ENCODE measurements at regions of chr11 and their contacts with region 1.

Region 1: GRCh38 chr11:103448966-103449365 is 339.7 kb downstream of the DYNC2H1 start:
- DNase-seq: no peak
- H3K4me3 ChIP-seq: no peak overlapping the region
- H3K27ac ChIP-seq: no peak overlapping the region
- H3K4me1 ChIP-seq: no peaks in the 10 kb centered on the region
- H3K27me3 ChIP-seq: no peaks in the 10 kb centered on the region
- CTCF ChIP-seq: no peak

Region 2: DNA sequence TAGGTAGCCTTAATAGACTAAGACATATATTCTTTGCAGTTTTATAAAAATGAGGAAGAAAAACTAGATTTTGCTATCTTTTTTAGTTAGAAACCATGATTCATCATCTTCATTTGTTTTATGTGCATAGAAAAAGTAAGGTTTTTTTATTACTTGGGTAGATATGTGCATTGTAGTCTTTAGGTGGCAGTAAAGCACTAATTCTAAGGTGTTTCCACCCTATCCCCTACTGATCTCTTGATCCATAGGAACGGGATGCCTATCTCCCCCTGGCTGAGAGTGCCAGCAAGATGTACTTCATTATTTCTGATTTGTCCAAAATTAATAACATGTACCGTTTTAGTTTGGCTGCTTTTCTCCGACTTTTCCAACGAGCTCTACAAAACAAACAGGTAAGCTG is 191.6 kb before region 1 on chr11:
- CTCF ChIA-PET with region 1: no interaction called
- dilution Hi-C with region 1: no loop called
- in situ Hi-C with region 1: no loop called
- intact Hi-C with region 1: loop called (anchors 10 kb)
- DNase-seq: no peak
- H3K4me3 ChIP-seq: no peak overlapping the region
- H3K27ac ChIP-seq: no peak overlapping the region
- H3K4me1 ChIP-seq: no peaks in the 10 kb centered on the region
- H3K27me3 ChIP-seq: no peaks in the 10 kb centered on the region
- CTCF ChIP-seq: peak; percentile 29 to 42

Region 3: GRCh38 chr11:103284260-103284659 is 164.7 kb before region 1 on chr11:
- CTCF ChIA-PET with region 1: no interaction called
- dilution Hi-C with region 1: no loop called
- in situ Hi-C with region 1: no loop called
- intact Hi-C with region 1: no loop called
- DNase-seq: no peak
- H3K4me3 ChIP-seq: no peak overlapping the region
- H3K27ac ChIP-seq: no peak overlapping the region
- H3K4me1 ChIP-seq: peaks cover 11% of the 10 kb centered on the region
- H3K27me3 ChIP-seq: no peaks in the 10 kb centered on the region
- CTCF ChIP-seq: no peak